Caco-2 (cell line): ENCODE measurements at regions of chr13 and their contacts with region 1.

Region 1: DNA sequence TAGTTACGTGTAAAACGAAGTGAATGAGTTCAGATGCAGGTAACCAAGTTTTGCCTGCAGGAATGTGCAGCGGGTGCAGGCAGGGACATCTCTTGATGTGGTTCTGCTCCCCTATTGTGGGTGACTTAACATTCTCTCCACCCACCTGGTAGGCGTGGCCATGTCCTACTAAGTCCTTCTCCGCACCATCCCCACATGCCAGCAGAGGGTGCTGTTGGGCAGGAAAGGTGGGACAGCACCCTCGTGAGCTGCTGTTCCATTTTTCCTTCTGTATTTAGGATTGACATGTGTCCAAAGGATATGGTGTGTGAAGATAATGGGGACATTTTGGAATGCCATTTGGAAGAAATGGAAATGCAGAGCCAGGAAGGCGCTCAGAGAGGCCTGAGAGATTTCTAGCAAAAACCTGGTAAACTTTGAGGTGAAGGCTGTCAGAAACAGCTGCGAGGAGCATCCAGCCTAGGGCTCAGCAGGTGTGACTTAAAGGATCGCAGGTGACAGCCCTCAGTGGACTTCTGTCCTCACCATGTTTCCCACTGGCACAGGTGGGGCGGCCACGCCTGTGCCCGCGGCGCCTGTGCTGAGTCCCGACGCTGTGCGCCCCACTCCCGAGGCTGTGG is 26.2 kb upstream of the MCF2L start:
- DNase-seq: peak; percentile 97 to 98
- H3K4me3 ChIP-seq: peak overlapping the region; percentile 69
- H3K4me3 Mint-ChIP-seq: peak overlapping the region; percentile 81
- H3K27ac Mint-ChIP-seq: peak overlapping the region; percentile 66
- H3K4me1 ChIP-seq: no peaks in the 10 kb centered on the region; the same call in 1 of the 2 replicates
- H3K4me1 Mint-ChIP-seq: peaks cover 5% of the 10 kb centered on the region
- H3K27me3 ChIP-seq: no peaks in the 10 kb centered on the region
- H3K27me3 Mint-ChIP-seq: no peaks in the 10 kb centered on the region
- CTCF ChIP-seq: peak; percentile 89 to 98

Region 2: GRCh38 chr13:112931028-112931934 is 11.5 kb before region 1 on chr13:
- CTCF ChIA-PET with region 1: interaction called, 20 read pairs
- POLR2A ChIA-PET with region 1: interaction called, 4 read pairs
- intact Hi-C with region 1: no loop called
- DNase-seq: peak; percentile 80 to 81
- H3K4me3 ChIP-seq: peak overlapping the region; percentile 32
- H3K4me3 Mint-ChIP-seq: peak overlapping the region; percentile 78
- H3K27ac Mint-ChIP-seq: peak overlapping the region; percentile 4
- H3K4me1 ChIP-seq: peaks cover 25% of the 10 kb centered on the region
- H3K4me1 Mint-ChIP-seq: peaks cover 17% of the 10 kb centered on the region
- H3K27me3 ChIP-seq: no peaks in the 10 kb centered on the region
- H3K27me3 Mint-ChIP-seq: no peaks in the 10 kb centered on the region
- CTCF ChIP-seq: peak; percentile 75 to 97

Region 3: GRCh38 chr13:112968908-112969691 is 26.3 kb after region 1 on chr13 and contains the start of gene MCF2L:
- CTCF ChIA-PET with region 1: interaction called, 11 read pairs
- POLR2A ChIA-PET with region 1: interaction called, 3 read pairs
- intact Hi-C with region 1: loop called (anchors 1 kb)
- DNase-seq: peak; percentile 60 to 73
- H3K4me3 ChIP-seq: peak within 1 kb of the TSS; percentile 89
- H3K4me3 Mint-ChIP-seq: peak within 1 kb of the TSS; percentile 85
- H3K27ac Mint-ChIP-seq: peak within 1 kb of the TSS; percentile 60
- H3K4me1 ChIP-seq: peaks cover 4% of the 10 kb centered on the region; the same call in 1 of the 2 replicates
- H3K4me1 Mint-ChIP-seq: no peaks in the 10 kb centered on the region
- H3K27me3 ChIP-seq: no peaks in the 10 kb centered on the region; the same call in 1 of the 2 replicates
- H3K27me3 Mint-ChIP-seq: peaks cover 5% of the 10 kb centered on the region
- CTCF ChIP-seq: peak in 1 of 2 experiments; percentile 49
- total RNA-seq, gene MCF2L: 22.1 and 24.4 TPM in 2 replicates

Region 4: GRCh38 chr13:112984954-112985802 is 42.4 kb after region 1 on chr13:
- CTCF ChIA-PET with region 1: interaction called, 8 read pairs
- POLR2A ChIA-PET with region 1: no interaction called
- intact Hi-C with region 1: loop called (anchors 1 kb)
- DNase-seq: peak in 1 of 2 experiments; percentile 60
- H3K4me3 ChIP-seq: peak overlapping the region; percentile 33
- H3K4me3 Mint-ChIP-seq: peak overlapping the region; percentile 66
- H3K27ac Mint-ChIP-seq: peak overlapping the region; percentile 53
- H3K4me1 ChIP-seq: peaks cover 27% of the 10 kb centered on the region
- H3K4me1 Mint-ChIP-seq: peaks cover 20% of the 10 kb centered on the region
- H3K27me3 ChIP-seq: no peaks in the 10 kb centered on the region
- H3K27me3 Mint-ChIP-seq: no peaks in the 10 kb centered on the region
- CTCF ChIP-seq: no peak

Region 5: DNA sequence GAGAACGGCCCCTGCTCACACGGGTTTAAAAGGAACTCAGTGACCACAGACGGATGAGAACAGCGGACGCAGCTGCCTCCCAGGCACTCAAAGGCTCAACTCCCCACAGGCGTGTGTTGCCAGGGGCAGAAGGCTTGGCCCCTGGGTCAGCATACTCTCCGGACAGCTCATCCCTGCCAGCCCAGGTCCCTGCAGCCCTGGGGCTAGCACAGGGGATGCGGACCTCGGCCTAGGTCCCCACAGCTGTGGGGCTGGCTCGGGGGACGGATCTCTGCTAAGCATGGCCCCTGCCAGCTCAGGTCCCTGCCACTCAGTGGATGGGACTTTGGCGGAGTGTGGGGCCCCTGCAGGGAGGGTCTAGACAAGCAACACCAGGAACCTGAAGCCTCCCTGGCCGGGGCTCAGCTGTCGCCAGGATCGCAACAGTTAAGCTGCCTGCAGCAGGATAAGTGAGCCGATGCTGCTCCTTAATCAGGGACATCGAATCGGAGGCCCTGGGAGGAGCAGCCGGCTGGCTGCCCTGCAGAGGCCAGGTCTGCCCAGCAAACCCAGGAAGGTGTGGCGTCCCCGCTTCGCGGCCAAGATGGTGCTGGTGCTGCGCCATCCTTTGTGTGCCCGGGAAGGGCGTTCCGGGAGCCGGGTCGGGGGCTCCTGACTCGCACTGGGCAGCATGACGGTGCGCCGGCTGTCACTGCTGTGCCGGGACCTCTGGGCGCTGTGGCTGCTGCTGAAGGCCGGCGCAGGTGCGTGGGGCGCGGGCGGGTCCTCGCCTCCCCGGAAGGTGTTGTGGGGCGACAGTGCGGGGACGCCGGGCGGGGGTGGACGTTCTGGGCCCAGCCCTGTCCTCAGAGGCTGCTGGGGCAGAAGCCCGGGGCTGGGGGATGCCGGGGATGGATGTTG is 58.7 kb after region 1 on chr13:
- CTCF ChIA-PET with region 1: interaction called, 20 read pairs
- POLR2A ChIA-PET with region 1: no interaction called
- intact Hi-C with region 1: loop called (anchors 1 kb)
- DNase-seq: peak; percentile 79 to 86
- H3K4me3 ChIP-seq: peak overlapping the region; percentile 36
- H3K4me3 Mint-ChIP-seq: peak overlapping the region; percentile 78
- H3K27ac Mint-ChIP-seq: no peak overlapping the region
- H3K4me1 ChIP-seq: peaks cover 21% of the 10 kb centered on the region
- H3K4me1 Mint-ChIP-seq: no peaks in the 10 kb centered on the region
- H3K27me3 ChIP-seq: no peaks in the 10 kb centered on the region
- H3K27me3 Mint-ChIP-seq: no peaks in the 10 kb centered on the region
- CTCF ChIP-seq: no peak

Region 6: GRCh38 chr13:113029487-113030258 is 86.9 kb after region 1 on chr13:
- CTCF ChIA-PET with region 1: interaction called, 44 read pairs
- POLR2A ChIA-PET with region 1: no interaction called
- intact Hi-C with region 1: loop called (anchors 1 kb)
- DNase-seq: peak; percentile 74 to 87
- H3K4me3 ChIP-seq: no peak overlapping the region
- H3K4me3 Mint-ChIP-seq: no peak overlapping the region
- H3K27ac Mint-ChIP-seq: no peak overlapping the region
- H3K4me1 ChIP-seq: no peaks in the 10 kb centered on the region
- H3K4me1 Mint-ChIP-seq: peaks cover 11% of the 10 kb centered on the region
- H3K27me3 ChIP-seq: no peaks in the 10 kb centered on the region
- H3K27me3 Mint-ChIP-seq: no peaks in the 10 kb centered on the region
- CTCF ChIP-seq: peak; percentile 95 to 97

Region 7: GRCh38 chr13:113208424-113209335 is 265.9 kb after region 1 on chr13 and contains the start of gene PCID2:
- CTCF ChIA-PET with region 1: no interaction called
- POLR2A ChIA-PET with region 1: no interaction called
- intact Hi-C with region 1: loop called (anchors 10 kb)
- DNase-seq: peak; percentile 92 to 97
- H3K4me3 ChIP-seq: peak within 1 kb of the TSS; percentile 89
- H3K4me3 Mint-ChIP-seq: peak within 1 kb of the TSS; percentile 76
- H3K27ac Mint-ChIP-seq: peak within 1 kb of the TSS; percentile 37
- H3K4me1 ChIP-seq: peaks cover 4% of the 10 kb centered on the region; the same call in 1 of the 2 replicates
- H3K4me1 Mint-ChIP-seq: peaks cover 23% of the 10 kb centered on the region
- H3K27me3 ChIP-seq: no peaks in the 10 kb centered on the region
- H3K27me3 Mint-ChIP-seq: no peaks in the 10 kb centered on the region
- CTCF ChIP-seq: no peak
- total RNA-seq, gene PCID2: 79.5 and 81.5 TPM in 2 replicates